ENCODE measurements at regions of chr22 and their contacts with region 1.

Region 1: GRCh38 chr22:38872172-38872830 is at the start of gene CBX6:
- DNase-seq: peak; percentile 94
- H3K4me3 Mint-ChIP-seq: peak within 1 kb of the TSS; percentile 92
- H3K27ac Mint-ChIP-seq: peak within 1 kb of the TSS; percentile 83
- H3K4me1 Mint-ChIP-seq: peaks cover 53% of the 10 kb centered on the region
- H3K27me3 Mint-ChIP-seq: peaks cover 15% of the 10 kb centered on the region
- total RNA-seq, gene CBX6: 76.5 TPM

Region 2: GRCh38 chr22:38696606-38697424 is 175.5 kb before region 1 on chr22:
- CTCF ChIA-PET with region 1: no interaction called
- POLR2A ChIA-PET with region 1: no interaction called
- DNase-seq: peak; percentile 61
- H3K4me3 Mint-ChIP-seq: peak overlapping the region; percentile 96
- H3K27ac Mint-ChIP-seq: peak overlapping the region; percentile 98
- H3K4me1 Mint-ChIP-seq: peaks cover 69% of the 10 kb centered on the region
- H3K27me3 Mint-ChIP-seq: no peaks in the 10 kb centered on the region

Region 3: DNA sequence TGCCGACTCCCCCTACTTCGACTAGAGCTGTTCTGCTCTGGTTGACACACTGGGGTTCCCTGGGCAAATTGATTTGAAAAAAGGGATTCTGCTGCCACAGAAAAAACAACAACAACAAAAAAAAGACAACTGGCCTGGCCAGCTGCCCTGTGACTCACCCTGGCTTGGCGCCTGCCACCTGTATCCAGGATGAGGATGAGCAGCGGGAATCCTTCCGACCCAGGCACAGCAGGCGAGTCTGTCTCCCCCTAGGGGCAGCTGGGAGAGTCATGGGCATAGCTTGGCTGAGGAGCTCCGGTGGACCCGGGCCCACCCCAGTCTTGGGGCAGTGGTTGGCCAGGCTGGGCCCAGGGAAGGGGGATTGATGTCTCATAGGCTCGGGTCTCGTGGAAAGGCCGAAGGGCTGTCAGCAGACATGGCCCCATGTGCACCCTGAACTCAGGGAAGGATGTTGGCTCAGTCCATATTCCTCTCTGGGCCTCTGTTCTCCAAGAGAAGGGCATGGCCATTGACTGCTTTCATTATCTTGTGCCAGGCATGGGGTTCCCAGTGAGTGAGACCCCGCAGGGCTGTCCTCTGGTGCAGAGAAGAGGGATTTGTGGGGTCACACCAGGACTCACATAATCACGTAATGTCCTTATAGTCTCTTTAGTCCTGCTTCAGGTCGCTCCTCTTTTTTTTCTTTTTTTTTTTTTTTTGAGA is 106.1 kb before region 1 on chr22:
- CTCF ChIA-PET with region 1: interaction called, 18 read pairs
- POLR2A ChIA-PET with region 1: interaction called, 3 read pairs
- DNase-seq: peak; percentile 41
- H3K4me3 Mint-ChIP-seq: no peak overlapping the region
- H3K27ac Mint-ChIP-seq: no peak overlapping the region
- H3K4me1 Mint-ChIP-seq: peaks cover 8% of the 10 kb centered on the region
- H3K27me3 Mint-ChIP-seq: no peaks in the 10 kb centered on the region

Region 4: GRCh38 chr22:38850941-38851849 is 21.1 kb before region 1 on chr22:
- CTCF ChIA-PET with region 1: interaction called, 12 read pairs
- POLR2A ChIA-PET with region 1: no interaction called
- DNase-seq: no peak
- H3K4me3 Mint-ChIP-seq: no peak overlapping the region
- H3K27ac Mint-ChIP-seq: no peak overlapping the region
- H3K4me1 Mint-ChIP-seq: no peaks in the 10 kb centered on the region
- H3K27me3 Mint-ChIP-seq: peaks cover 36% of the 10 kb centered on the region

Region 5: GRCh38 chr22:38953577-38954413 is 81.5 kb after region 1 on chr22:
- CTCF ChIA-PET with region 1: interaction called, 11 read pairs
- POLR2A ChIA-PET with region 1: interaction called, 12 read pairs
- DNase-seq: peak; percentile 86
- H3K4me3 Mint-ChIP-seq: peak overlapping the region; percentile 52
- H3K27ac Mint-ChIP-seq: peak overlapping the region; percentile 82
- H3K4me1 Mint-ChIP-seq: peaks cover 48% of the 10 kb centered on the region
- H3K27me3 Mint-ChIP-seq: peaks cover 2% of the 10 kb centered on the region

Region 6: DNA sequence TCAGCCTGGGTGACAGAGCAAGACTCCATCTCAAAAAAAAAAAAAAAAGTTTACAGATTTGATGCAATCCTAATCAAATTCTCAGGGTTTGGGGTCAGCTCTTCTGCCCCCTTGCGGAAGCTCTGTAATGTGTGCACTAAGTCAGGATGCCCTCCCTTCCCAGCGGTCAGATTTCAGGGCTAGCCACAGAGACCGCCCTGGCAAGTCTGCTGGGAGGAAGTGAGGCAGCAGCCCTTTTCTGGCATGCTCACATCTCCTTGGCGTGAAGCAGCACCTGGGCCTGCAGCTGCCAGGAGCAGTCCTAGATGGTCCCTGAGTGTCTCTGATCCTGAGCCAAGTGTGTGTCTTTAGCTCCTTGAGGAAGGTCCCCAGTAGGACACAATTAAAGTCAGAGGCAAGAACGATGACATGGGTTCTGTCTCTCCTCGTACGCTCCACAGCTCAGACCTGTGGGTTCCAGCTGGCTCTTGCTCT is 130.9 kb after region 1 on chr22:
- CTCF ChIA-PET with region 1: interaction called, 141 read pairs
- POLR2A ChIA-PET with region 1: interaction called, 30 read pairs
- DNase-seq: peak; percentile 88
- H3K4me3 Mint-ChIP-seq: no peak overlapping the region
- H3K27ac Mint-ChIP-seq: peak overlapping the region; percentile 4
- H3K4me1 Mint-ChIP-seq: peaks cover 18% of the 10 kb centered on the region
- H3K27me3 Mint-ChIP-seq: peaks cover 6% of the 10 kb centered on the region

Region 7: GRCh38 chr22:39117585-39118191 is 245.4 kb after region 1 on chr22:
- CTCF ChIA-PET with region 1: interaction called, 19 read pairs
- POLR2A ChIA-PET with region 1: no interaction called
- DNase-seq: peak; percentile 83
- H3K4me3 Mint-ChIP-seq: peak overlapping the region; percentile 49
- H3K27ac Mint-ChIP-seq: peak overlapping the region; percentile 82
- H3K4me1 Mint-ChIP-seq: peaks cover 60% of the 10 kb centered on the region
- H3K27me3 Mint-ChIP-seq: no peaks in the 10 kb centered on the region

Region 8: DNA sequence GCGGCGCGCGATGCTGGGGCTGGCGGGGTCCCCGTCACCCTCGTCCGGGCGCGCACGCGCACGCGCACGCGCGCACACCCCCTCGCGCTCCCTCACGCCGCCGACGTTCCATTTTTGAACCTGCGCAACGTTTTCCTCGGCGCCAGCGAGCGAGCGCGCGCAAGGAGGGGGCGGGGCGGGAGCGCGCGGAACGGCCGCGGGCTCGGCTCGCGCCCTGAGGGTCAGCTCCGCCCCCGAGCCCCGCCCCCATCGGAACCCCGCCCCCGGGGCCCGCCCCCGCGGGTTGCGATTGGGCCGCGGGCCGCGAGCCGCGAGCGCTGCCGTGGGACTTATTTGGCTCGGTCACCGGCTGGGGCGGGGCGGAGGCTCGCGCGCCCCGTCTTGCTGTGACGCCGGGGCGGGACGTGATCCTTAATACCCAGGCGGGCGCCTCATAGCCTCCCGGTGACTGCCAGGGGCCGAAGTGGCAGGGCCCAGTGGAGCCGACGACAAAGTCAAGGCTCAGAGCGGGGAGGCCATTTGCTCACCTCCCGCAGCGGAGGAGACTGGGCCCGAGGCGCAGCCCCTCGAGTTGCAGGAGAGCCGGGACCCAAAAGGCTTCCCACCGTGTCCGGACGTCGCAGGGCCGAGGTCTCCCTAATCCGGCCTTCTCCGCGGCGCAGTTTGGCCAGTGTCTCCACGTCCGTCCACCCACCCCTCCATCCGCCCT is 280.4 kb after region 1 on chr22 and contains the start of gene CBX7:
- CTCF ChIA-PET with region 1: interaction called, 10 read pairs
- POLR2A ChIA-PET with region 1: interaction called, 4 read pairs
- DNase-seq: peak; percentile 97
- H3K4me3 Mint-ChIP-seq: peak within 1 kb of the TSS; percentile 78
- H3K27ac Mint-ChIP-seq: peak within 1 kb of the TSS; percentile 58
- H3K4me1 Mint-ChIP-seq: peaks cover 46% of the 10 kb centered on the region
- H3K27me3 Mint-ChIP-seq: peaks cover 30% of the 10 kb centered on the region
- total RNA-seq, gene CBX7: 24.9 to 25.0 TPM

Measured in activated CD4-positive, alpha-beta memory T cell treated with anti-CD3 and anti-CD28 coated beads, Interleukin-2, amount 10 ng/mL, durations not matched to agents 7 days and 5 days (primary cell).